Activated B cell treated with CpG ODN at 0.5 μM for 24 hours (primary cell): ENCODE measurements at regions of chr7 and their contacts with region 1.

Region 1: GRCh38 chr7:47669061-47669891 is 87.4 kb upstream of the TNS3 start:
- DNase-seq: peak; percentile 63
- ATAC-seq: peak; percentile 79
- H3K4me3 Mint-ChIP-seq: peak overlapping the region; percentile 67
- H3K27ac Mint-ChIP-seq: peak overlapping the region; percentile 95
- H3K4me1 Mint-ChIP-seq: peaks cover 65% of the 10 kb centered on the region
- H3K27me3 Mint-ChIP-seq: no peaks in the 10 kb centered on the region
- CTCF ChIP-seq: no peak

Region 2: DNA sequence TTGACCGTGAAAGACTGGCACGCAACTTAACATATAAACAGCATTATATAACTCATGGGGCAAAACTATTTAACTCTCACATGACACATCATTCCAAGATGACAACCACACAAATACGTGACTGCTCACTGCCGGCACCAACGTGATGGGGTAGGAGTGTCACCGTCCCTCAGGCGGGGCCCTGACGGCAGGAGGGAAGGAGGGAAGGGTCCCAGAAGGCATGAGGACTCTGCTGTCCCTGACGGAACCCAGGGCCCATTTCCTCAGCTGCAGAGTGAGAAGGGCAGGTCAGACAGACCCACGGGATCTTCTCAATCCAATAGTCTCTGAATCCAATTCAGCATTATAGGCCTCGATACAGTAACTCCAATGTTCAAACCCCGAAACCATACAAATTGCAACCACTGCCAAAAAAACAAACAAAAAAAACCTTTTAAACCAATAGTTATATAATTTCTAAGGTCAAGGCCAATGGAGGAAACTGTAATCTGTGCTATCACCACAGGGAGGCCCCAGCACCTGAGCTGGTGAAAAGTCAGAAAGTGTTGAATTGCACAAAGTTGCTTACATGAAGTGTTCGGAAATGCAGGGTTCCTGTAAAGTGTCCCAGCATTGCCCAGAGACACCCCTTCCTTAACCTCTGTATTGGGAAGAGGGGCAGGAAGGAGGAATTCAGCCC is 224.8 kb before region 1 on chr7:
- CTCF ChIA-PET with region 1: no interaction called
- POLR2A ChIA-PET with region 1: interaction called, 3 read pairs
- intact Hi-C with region 1: loop called (anchors 5 kb)
- DNase-seq: no peak
- ATAC-seq: peak; percentile 72
- H3K4me3 Mint-ChIP-seq: no peak overlapping the region
- H3K27ac Mint-ChIP-seq: no peak overlapping the region
- H3K4me1 Mint-ChIP-seq: peaks cover 22% of the 10 kb centered on the region
- H3K27me3 Mint-ChIP-seq: no peaks in the 10 kb centered on the region
- CTCF ChIP-seq: no peak

Region 3: GRCh38 chr7:47571331-47572093 is 97.8 kb before region 1 on chr7:
- CTCF ChIA-PET with region 1: interaction called, 4 read pairs
- POLR2A ChIA-PET with region 1: interaction called, 9 read pairs
- intact Hi-C with region 1: loop called (anchors 2 kb)
- DNase-seq: no peak
- ATAC-seq: peak; percentile 32
- H3K4me3 Mint-ChIP-seq: peak overlapping the region; percentile 75
- H3K27ac Mint-ChIP-seq: peak overlapping the region; percentile 87
- H3K4me1 Mint-ChIP-seq: peaks cover 90% of the 10 kb centered on the region
- H3K27me3 Mint-ChIP-seq: no peaks in the 10 kb centered on the region
- CTCF ChIP-seq: no peak

Region 4: DNA sequence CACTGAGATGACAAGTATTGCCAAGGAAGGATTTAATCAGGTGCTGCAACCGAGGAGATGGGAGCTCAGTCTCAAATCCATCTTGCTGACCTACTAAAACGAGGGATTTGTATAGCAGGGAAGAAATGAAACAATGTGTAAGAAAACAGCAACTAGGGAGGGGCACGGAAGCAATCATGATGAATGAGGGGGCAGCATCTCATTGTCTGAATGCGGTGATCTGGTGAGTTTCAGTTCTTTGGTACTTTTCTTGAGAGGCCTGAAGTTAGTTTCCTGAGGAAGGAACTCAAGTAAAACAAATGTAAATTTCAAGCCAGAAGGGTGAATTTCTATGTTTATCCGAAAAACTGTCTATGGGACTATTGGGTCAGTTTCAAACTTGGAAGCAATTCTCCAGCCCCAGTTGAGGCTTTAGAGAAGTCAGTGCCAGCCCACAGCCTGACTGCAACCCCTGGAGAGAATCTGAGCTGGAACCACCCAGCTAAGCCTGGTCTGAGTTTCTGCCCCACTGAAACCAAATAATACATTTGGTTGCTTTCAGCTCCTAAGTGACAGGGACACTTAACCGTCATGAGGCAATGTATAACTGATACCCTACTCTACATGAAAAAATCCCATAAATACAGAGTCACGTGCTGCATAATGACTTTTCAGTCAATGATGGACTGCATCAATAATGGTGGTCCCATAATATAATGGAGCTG is 41.5 kb before region 1 on chr7:
- CTCF ChIA-PET with region 1: no interaction called
- POLR2A ChIA-PET with region 1: interaction called, 13 read pairs
- intact Hi-C with region 1: loop called (anchors 1 kb)
- DNase-seq: no peak
- ATAC-seq: peak; percentile 71
- H3K4me3 Mint-ChIP-seq: peak overlapping the region; percentile 33
- H3K27ac Mint-ChIP-seq: peak overlapping the region; percentile 71
- H3K4me1 Mint-ChIP-seq: peaks cover 64% of the 10 kb centered on the region
- H3K27me3 Mint-ChIP-seq: no peaks in the 10 kb centered on the region
- CTCF ChIP-seq: no peak

Region 5: GRCh38 chr7:47724335-47724982 is 55.2 kb after region 1 on chr7:
- CTCF ChIA-PET with region 1: interaction called, 6 read pairs
- POLR2A ChIA-PET with region 1: interaction called, 12 read pairs
- intact Hi-C with region 1: loop called (anchors 1 kb)
- DNase-seq: no peak
- ATAC-seq: no peak
- H3K4me3 Mint-ChIP-seq: peak overlapping the region; percentile 66
- H3K27ac Mint-ChIP-seq: peak overlapping the region; percentile 72
- H3K4me1 Mint-ChIP-seq: peaks cover 80% of the 10 kb centered on the region
- H3K27me3 Mint-ChIP-seq: no peaks in the 10 kb centered on the region
- CTCF ChIP-seq: no peak

Region 6: DNA sequence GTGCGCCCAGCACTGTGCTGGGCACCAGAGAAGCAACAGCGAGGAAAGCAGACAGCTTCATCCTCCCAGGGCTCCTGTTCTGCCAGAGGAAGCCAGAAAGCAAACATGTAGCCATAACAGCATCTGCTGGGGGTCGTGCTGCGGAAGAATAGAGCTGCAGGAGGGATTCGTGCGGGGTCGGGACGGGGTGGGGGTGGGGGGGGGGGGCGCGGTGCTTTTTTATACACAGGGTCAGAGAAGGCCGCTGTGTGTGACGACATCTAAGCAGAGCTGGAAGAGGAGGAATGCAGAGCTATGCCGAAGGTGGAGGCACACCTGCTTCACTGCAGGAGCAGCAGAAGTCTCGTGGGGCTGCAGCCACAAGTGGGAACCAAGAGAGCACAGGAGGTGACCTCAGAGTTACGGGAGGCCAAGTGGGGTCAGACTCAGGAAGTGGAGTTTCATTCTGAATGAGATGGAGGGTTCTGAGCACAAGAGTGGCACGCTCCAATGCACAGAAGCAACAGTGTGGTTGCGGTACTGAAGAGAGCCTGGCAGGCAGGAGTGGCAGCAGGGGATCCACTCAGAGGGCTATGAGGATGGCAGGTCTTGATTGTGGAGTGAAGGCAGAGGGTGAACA is 267.9 kb after region 1 on chr7:
- CTCF ChIA-PET with region 1: no interaction called
- POLR2A ChIA-PET with region 1: interaction called, 5 read pairs
- intact Hi-C with region 1: loop called (anchors 2 kb)
- DNase-seq: peak; percentile 62
- ATAC-seq: peak; percentile 91
- H3K4me3 Mint-ChIP-seq: peak overlapping the region; percentile 63
- H3K27ac Mint-ChIP-seq: peak overlapping the region; percentile 46
- H3K4me1 Mint-ChIP-seq: peaks cover 35% of the 10 kb centered on the region
- H3K27me3 Mint-ChIP-seq: no peaks in the 10 kb centered on the region
- CTCF ChIP-seq: no peak